Caco-2 (cell line): ENCODE measurements at regions of chr11 and their contacts with region 1.

Region 1: GRCh38 chr11:71251761-71252443 is 475 bp downstream of the SHANK2 start:
- DNase-seq: peak; percentile 74 to 92
- H3K4me3 ChIP-seq: peak overlapping the region; percentile 67
- H3K4me3 Mint-ChIP-seq: peak overlapping the region; percentile 83
- H3K27ac Mint-ChIP-seq: peak overlapping the region; percentile 95
- H3K4me1 ChIP-seq: peaks cover 53% of the 10 kb centered on the region
- H3K4me1 Mint-ChIP-seq: peaks cover 61% of the 10 kb centered on the region
- H3K27me3 ChIP-seq: no peaks in the 10 kb centered on the region
- H3K27me3 Mint-ChIP-seq: no peaks in the 10 kb centered on the region
- CTCF ChIP-seq: peak; percentile 54 to 87

Region 2: DNA sequence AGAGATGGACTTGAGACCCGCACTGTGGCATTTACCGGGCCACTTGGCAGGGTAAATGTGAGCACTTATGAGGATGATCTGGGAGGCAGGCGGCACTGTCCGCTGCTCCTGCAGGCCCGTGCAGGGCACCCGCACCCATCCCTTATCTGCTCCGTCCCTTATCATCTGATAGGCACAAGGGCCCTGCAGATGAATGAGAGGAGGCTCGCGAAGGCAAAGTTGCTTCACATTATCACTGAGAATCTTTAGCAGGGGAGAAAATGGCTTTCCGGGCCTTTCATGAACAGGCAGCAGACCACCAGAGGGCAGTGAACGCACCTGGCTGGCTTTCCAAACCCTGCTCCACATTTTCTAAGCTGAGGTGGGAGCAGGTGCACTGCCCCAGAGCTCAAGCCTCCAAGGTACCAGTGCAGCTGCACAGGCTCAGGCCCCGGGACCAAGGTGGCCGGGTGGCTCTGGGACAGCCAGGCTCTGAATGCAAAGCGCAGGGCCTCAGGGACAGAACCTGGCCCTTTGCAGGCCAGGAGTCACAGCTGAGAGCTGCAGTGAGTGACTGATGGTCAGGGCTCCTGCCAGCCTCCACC is 165.1 kb before region 1 on chr11:
- CTCF ChIA-PET with region 1: interaction called, 17 read pairs
- POLR2A ChIA-PET with region 1: interaction called, 8 read pairs
- intact Hi-C with region 1: loop called (anchors 2 kb)
- DNase-seq: peak; percentile 79
- H3K4me3 ChIP-seq: no peak overlapping the region
- H3K4me3 Mint-ChIP-seq: no peak overlapping the region
- H3K27ac Mint-ChIP-seq: no peak overlapping the region
- H3K4me1 ChIP-seq: no peaks in the 10 kb centered on the region
- H3K4me1 Mint-ChIP-seq: no peaks in the 10 kb centered on the region
- H3K27me3 ChIP-seq: no peaks in the 10 kb centered on the region
- H3K27me3 Mint-ChIP-seq: no peaks in the 10 kb centered on the region
- CTCF ChIP-seq: peak; percentile 85 to 96

Region 3: GRCh38 chr11:71179898-71180605 is 71.8 kb before region 1 on chr11:
- CTCF ChIA-PET with region 1: interaction called, 4 read pairs
- POLR2A ChIA-PET with region 1: interaction called, 4 read pairs
- intact Hi-C with region 1: loop called (anchors 5 kb)
- DNase-seq: peak; percentile 78 to 90
- H3K4me3 ChIP-seq: no peak overlapping the region
- H3K4me3 Mint-ChIP-seq: no peak overlapping the region
- H3K27ac Mint-ChIP-seq: peak overlapping the region; percentile 73
- H3K4me1 ChIP-seq: peaks cover 25% of the 10 kb centered on the region
- H3K4me1 Mint-ChIP-seq: peaks cover 30% of the 10 kb centered on the region
- H3K27me3 ChIP-seq: no peaks in the 10 kb centered on the region
- H3K27me3 Mint-ChIP-seq: no peaks in the 10 kb centered on the region
- CTCF ChIP-seq: no peak

Region 4: DNA sequence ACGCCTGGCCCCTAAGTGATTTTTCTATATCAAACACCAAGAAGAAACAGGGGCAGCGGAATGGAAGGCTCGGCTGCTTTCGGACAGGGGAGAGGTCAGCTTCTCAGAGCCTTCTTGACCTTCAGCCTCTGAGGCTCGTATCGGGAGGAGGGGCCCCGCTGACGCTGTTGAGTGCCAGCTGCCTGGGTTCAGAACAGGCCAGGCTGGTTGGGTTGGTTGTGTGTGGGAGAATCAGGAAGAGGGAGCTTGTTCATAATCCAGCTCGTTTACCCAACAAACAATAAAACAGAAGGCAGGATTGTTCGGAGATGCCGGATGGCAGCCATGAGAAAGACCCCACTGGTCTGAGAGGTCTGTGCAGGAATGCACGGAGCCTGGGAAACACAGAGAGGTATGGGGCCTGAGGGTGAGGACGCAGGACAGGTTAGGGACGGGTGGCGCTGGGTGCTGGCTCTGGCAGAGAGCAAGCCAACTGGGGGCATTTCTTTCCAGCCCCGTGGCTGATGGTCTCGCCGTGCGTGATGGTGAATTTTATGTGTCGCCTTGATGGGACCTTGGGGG is 32.1 kb after region 1 on chr11:
- CTCF ChIA-PET with region 1: interaction called, 25 read pairs
- POLR2A ChIA-PET with region 1: interaction called, 86 read pairs
- intact Hi-C with region 1: loop called (anchors 1 kb)
- DNase-seq: peak; percentile 99
- H3K4me3 ChIP-seq: peak overlapping the region; percentile 38
- H3K4me3 Mint-ChIP-seq: peak overlapping the region; percentile 72
- H3K27ac Mint-ChIP-seq: peak overlapping the region; percentile 87
- H3K4me1 ChIP-seq: peaks cover 45% of the 10 kb centered on the region
- H3K4me1 Mint-ChIP-seq: peaks cover 52% of the 10 kb centered on the region
- H3K27me3 ChIP-seq: no peaks in the 10 kb centered on the region
- H3K27me3 Mint-ChIP-seq: no peaks in the 10 kb centered on the region
- CTCF ChIP-seq: no peak

Region 5: GRCh38 chr11:71329165-71329510 is 77.2 kb after region 1 on chr11:
- CTCF ChIA-PET with region 1: interaction called, 13 read pairs
- POLR2A ChIA-PET with region 1: no interaction called
- intact Hi-C with region 1: no loop called
- DNase-seq: no peak
- H3K4me3 ChIP-seq: no peak overlapping the region
- H3K4me3 Mint-ChIP-seq: no peak overlapping the region
- H3K27ac Mint-ChIP-seq: no peak overlapping the region
- H3K4me1 ChIP-seq: no peaks in the 10 kb centered on the region
- H3K4me1 Mint-ChIP-seq: no peaks in the 10 kb centered on the region
- H3K27me3 ChIP-seq: no peaks in the 10 kb centered on the region
- H3K27me3 Mint-ChIP-seq: no peaks in the 10 kb centered on the region
- CTCF ChIP-seq: no peak

Region 6: DNA sequence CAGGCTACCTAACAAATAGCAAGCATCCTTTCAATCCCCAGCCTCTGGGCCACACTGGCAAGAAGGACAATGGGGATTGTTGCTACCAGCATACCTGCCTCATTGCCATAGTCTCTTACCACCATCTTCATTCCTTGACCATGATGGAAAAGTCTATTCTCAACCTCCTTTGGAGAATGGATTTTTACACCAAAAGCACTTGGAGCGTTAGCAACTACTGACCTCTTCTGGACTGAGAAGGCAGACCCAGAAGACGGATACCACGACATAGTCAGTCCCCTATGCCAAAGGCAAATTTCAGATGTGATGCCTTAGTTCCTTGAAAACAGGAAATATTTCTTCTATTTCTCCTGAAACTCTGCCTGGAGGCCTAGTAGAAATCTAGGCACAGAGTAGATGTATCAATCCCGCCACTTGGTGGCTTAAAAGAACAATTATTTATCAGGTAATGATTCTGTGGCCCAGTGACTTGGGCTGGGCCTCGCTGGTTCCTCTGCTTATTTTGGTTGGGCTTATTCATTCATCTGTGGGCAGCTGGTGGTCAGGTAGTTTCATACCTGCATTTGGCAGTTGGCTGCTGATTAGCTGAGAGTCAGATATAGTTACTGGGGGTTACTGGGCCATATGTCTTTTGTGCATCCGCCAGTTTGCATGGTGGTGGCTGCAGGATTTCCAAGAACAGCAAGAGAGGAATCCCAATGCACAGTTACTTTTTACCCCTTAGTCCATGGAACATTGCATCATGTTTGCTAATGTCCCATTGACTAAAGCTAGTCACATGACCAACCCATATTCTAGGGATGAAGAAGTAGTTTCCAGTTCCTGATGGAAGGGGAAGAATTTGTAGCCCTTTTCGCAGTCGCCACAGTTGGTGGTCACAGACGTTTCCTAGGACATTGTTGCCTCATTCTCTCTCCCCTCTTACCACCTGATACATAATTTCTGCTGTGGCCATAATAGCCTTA is 121.1 kb after region 1 on chr11:
- CTCF ChIA-PET with region 1: interaction called, 4 read pairs
- POLR2A ChIA-PET with region 1: no interaction called
- intact Hi-C with region 1: loop called (anchors 2 kb)
- DNase-seq: peak in 1 of 2 experiments; percentile 60
- H3K4me3 ChIP-seq: no peak overlapping the region
- H3K4me3 Mint-ChIP-seq: no peak overlapping the region
- H3K27ac Mint-ChIP-seq: no peak overlapping the region
- H3K4me1 ChIP-seq: no peaks in the 10 kb centered on the region
- H3K4me1 Mint-ChIP-seq: no peaks in the 10 kb centered on the region
- H3K27me3 ChIP-seq: no peaks in the 10 kb centered on the region
- H3K27me3 Mint-ChIP-seq: peaks cover 11% of the 10 kb centered on the region
- CTCF ChIP-seq: peak; percentile 74 to 90